ENCODE measurements at regions of chr3 and their contacts with region 1.

Region 1: DNA sequence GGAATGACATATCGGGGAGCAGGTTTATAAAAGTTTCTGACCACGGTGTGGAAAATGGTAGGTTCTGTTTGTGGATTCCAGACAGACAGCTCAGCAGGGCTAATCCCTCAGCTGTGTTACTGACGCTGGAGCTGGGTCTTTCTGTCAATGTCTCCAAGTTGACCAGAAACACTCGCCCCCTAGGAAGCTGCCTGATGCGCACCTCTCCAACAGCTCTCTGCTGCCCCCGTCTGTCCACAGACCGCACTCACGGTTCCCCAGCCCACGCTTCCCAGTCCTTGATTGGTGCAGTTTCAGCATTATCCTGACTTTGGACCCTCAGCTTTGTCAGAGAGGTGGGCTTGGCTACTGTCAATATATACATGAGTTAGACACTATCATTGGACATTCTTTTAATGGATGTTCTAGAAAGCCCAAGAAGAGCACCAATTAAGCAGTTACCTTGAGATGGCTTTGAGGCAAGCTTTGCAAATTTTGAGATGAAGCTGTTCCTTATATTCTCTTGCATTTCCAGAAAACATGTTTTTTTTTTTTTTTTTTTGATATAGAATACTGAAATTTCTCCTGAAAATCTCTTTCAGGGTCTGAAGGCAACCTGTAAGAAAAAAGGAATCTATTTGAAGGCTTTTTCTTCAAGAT is 98.9 kb upstream of the TBC1D5 start:
- DNase-seq: peak in 4 of 5 donors; percentile 47 to 57 (median 52)
- H3K4me3 ChIP-seq: no peak overlapping the region
- H3K4me3 Mint-ChIP-seq: no peak overlapping the region
- H3K27ac ChIP-seq: no peak overlapping the region
- H3K27ac Mint-ChIP-seq: no peak overlapping the region
- H3K4me1 ChIP-seq: no peaks in the 10 kb centered on the region
- H3K4me1 Mint-ChIP-seq: no peaks in the 10 kb centered on the region
- H3K27me3 ChIP-seq: no peaks in the 10 kb centered on the region
- H3K27me3 Mint-ChIP-seq: peaks cover 0 to 9% of the 10 kb centered on the region in 2 donors

Region 2: GRCh38 chr3:17258823-17259436 is 582.4 kb before region 1 on chr3:
- CTCF ChIA-PET with region 1: interaction called, 19 read pairs
- POLR2A ChIA-PET with region 1: no interaction called
- intact Hi-C with region 1: loop called (anchors 1 kb)
- DNase-seq: peak in 4 of 5 donors; percentile 31 to 45 (median 39)
- H3K4me3 ChIP-seq: no peak overlapping the region
- H3K4me3 Mint-ChIP-seq: no peak overlapping the region
- H3K27ac ChIP-seq: no peak overlapping the region
- H3K27ac Mint-ChIP-seq: no peak overlapping the region
- H3K4me1 ChIP-seq: no peaks in the 10 kb centered on the region
- H3K4me1 Mint-ChIP-seq: peaks cover 0 to 1% (median 0%) of the 10 kb centered on the region in 4 donors
- H3K27me3 ChIP-seq: no peaks in the 10 kb centered on the region
- H3K27me3 Mint-ChIP-seq: no peaks in the 10 kb centered on the region

Region 3: GRCh38 chr3:17431004-17431403 is 410.3 kb before region 1 on chr3:
- CTCF ChIA-PET with region 1: interaction called, 15 read pairs
- POLR2A ChIA-PET with region 1: no interaction called
- intact Hi-C with region 1: loop called (anchors 1 kb)
- DNase-seq: no peak
- H3K4me3 ChIP-seq: no peak overlapping the region
- H3K4me3 Mint-ChIP-seq: no peak overlapping the region
- H3K27ac ChIP-seq: no peak overlapping the region
- H3K27ac Mint-ChIP-seq: no peak overlapping the region
- H3K4me1 ChIP-seq: no peaks in the 10 kb centered on the region
- H3K4me1 Mint-ChIP-seq: no peaks in the 10 kb centered on the region
- H3K27me3 ChIP-seq: no peaks in the 10 kb centered on the region
- H3K27me3 Mint-ChIP-seq: no peaks in the 10 kb centered on the region

Region 4: DNA sequence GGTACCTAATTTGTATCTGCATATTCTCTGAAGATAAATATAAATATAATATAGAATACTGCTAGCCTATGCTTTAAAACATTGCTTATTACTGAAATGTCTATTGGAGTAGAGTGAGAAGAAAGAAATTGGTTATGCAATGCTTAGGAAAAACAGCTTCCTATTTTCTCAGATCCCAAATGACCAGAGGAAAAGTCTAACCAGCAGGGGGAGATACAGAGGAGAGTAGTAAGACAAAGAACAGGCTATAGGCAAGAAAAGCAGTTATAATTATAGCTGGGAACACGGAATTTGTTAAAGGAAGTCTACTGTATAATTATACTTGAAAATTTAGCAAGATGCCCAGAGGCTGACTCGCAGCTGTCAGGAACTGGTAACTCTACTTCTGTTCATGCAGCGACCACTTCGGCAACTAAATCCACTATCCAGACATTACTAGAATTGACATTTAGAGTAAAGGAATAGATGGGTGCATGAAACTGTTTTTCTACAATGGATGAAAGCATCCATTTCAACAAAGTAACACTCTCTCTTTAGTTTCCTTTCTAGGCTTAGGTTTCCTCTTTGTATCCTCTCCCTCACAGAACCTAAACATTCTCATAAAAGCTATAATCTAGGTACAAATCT is 196.1 kb before region 1 on chr3:
- CTCF ChIA-PET with region 1: interaction called, 131 read pairs
- POLR2A ChIA-PET with region 1: interaction called, 6 read pairs
- intact Hi-C with region 1: loop called (anchors 1 kb)
- DNase-seq: peak in 4 of 5 donors; percentile 8 to 23 (median 16)
- H3K4me3 ChIP-seq: no peak overlapping the region
- H3K4me3 Mint-ChIP-seq: no peak overlapping the region
- H3K27ac ChIP-seq: no peak overlapping the region
- H3K27ac Mint-ChIP-seq: no peak overlapping the region
- H3K4me1 ChIP-seq: no peaks in the 10 kb centered on the region
- H3K4me1 Mint-ChIP-seq: peaks cover 0 to 6% (median 4%) of the 10 kb centered on the region in 4 donors
- H3K27me3 ChIP-seq: no peaks in the 10 kb centered on the region
- H3K27me3 Mint-ChIP-seq: no peaks in the 10 kb centered on the region

Region 5: GRCh38 chr3:17852217-17852616 is 10.9 kb after region 1 on chr3:
- CTCF ChIA-PET with region 1: interaction called, 24 read pairs
- POLR2A ChIA-PET with region 1: no interaction called
- intact Hi-C with region 1: no loop called
- DNase-seq: no peak
- H3K4me3 ChIP-seq: no peak overlapping the region
- H3K4me3 Mint-ChIP-seq: no peak overlapping the region
- H3K27ac ChIP-seq: no peak overlapping the region
- H3K27ac Mint-ChIP-seq: no peak overlapping the region
- H3K4me1 ChIP-seq: no peaks in the 10 kb centered on the region
- H3K4me1 Mint-ChIP-seq: no peaks in the 10 kb centered on the region
- H3K27me3 ChIP-seq: no peaks in the 10 kb centered on the region
- H3K27me3 Mint-ChIP-seq: peaks cover 0 to 1% of the 10 kb centered on the region in 2 donors